Caco-2 (cell line): ENCODE measurements at regions of chr9 and their contacts with region 1.

Region 1: DNA sequence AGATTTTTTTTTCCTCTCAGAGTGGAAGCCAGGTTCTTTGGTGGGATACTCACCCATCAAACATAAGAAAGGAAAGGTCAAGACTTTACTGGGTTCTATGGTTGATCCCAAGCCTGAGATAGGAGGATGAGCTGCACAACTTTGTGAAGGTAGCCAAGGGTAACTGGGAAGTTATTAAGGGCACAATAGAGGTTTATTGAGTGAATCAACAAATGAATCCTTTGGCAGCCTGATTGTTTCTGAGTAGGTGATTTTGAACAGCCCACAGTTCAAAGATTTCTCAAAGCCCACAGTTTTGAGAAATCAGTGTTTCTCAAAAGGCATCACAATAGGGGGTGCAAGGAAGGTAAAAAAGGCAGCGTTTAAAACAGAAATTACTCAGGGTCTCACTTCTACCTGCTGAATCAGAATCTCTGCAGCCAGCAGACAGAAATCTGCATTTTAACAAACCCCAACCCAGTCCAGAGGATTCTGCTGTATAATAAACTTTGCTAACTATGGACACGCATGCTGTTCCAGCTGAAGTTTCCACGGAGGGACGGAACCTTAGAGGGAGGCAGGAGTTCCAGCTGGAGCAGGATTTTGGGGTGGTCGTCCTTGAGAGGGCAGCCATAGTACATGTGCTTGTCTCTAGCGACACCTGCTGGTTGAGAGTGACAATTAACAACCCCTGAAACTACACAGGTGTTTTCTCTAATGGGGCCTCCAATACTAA is 32.7 kb upstream of the FSD1L start:
- DNase-seq: peak; percentile 63 to 65
- H3K4me3 ChIP-seq: no peak overlapping the region
- H3K4me3 Mint-ChIP-seq: peak overlapping the region; percentile 56
- H3K27ac Mint-ChIP-seq: no peak overlapping the region
- H3K4me1 ChIP-seq: peaks cover 22% of the 10 kb centered on the region
- H3K4me1 Mint-ChIP-seq: peaks cover 14% of the 10 kb centered on the region
- H3K27me3 ChIP-seq: no peaks in the 10 kb centered on the region
- H3K27me3 Mint-ChIP-seq: no peaks in the 10 kb centered on the region
- CTCF ChIP-seq: peak; percentile 86 to 94

Region 2: GRCh38 chr9:104863180-104863883 is 551.8 kb before region 1 on chr9:
- CTCF ChIA-PET with region 1: no interaction called
- POLR2A ChIA-PET with region 1: no interaction called
- intact Hi-C with region 1: loop called (anchors 1 kb)
- DNase-seq: peak; percentile 62 to 69
- H3K4me3 ChIP-seq: no peak overlapping the region
- H3K4me3 Mint-ChIP-seq: no peak overlapping the region
- H3K27ac Mint-ChIP-seq: no peak overlapping the region
- H3K4me1 ChIP-seq: 0 out of 2 replicates have a peak, but pooled peaks cover 11% of the 10 kb centered on the region
- H3K4me1 Mint-ChIP-seq: peaks cover 19% of the 10 kb centered on the region
- H3K27me3 ChIP-seq: no peaks in the 10 kb centered on the region
- H3K27me3 Mint-ChIP-seq: no peaks in the 10 kb centered on the region
- CTCF ChIP-seq: peak; percentile 68 to 85

Region 3: GRCh38 chr9:105157130-105157583 is 257.9 kb before region 1 on chr9:
- CTCF ChIA-PET with region 1: no interaction called
- POLR2A ChIA-PET with region 1: no interaction called
- intact Hi-C with region 1: loop called (anchors 1 kb)
- DNase-seq: peak in 1 of 2 experiments; percentile 52
- H3K4me3 ChIP-seq: no peak overlapping the region
- H3K4me3 Mint-ChIP-seq: no peak overlapping the region
- H3K27ac Mint-ChIP-seq: no peak overlapping the region
- H3K4me1 ChIP-seq: 0 out of 2 replicates have a peak, but pooled peaks cover 4% of the 10 kb centered on the region
- H3K4me1 Mint-ChIP-seq: no peaks in the 10 kb centered on the region
- H3K27me3 ChIP-seq: no peaks in the 10 kb centered on the region
- H3K27me3 Mint-ChIP-seq: no peaks in the 10 kb centered on the region
- CTCF ChIP-seq: peak; percentile 32 to 35

Region 4: GRCh38 chr9:105244003-105244733 is 170.9 kb before region 1 on chr9 and contains the start of gene SLC44A1:
- CTCF ChIA-PET with region 1: interaction called, 12 read pairs
- POLR2A ChIA-PET with region 1: interaction called, 8 read pairs
- intact Hi-C with region 1: loop called (anchors 1 kb)
- DNase-seq: peak; percentile 97 to 98
- H3K4me3 ChIP-seq: peak within 1 kb of the TSS; percentile 76
- H3K4me3 Mint-ChIP-seq: peak within 1 kb of the TSS; percentile 97
- H3K27ac Mint-ChIP-seq: peak within 1 kb of the TSS; percentile 91
- H3K4me1 ChIP-seq: peaks cover 14% of the 10 kb centered on the region
- H3K4me1 Mint-ChIP-seq: peaks cover 23% of the 10 kb centered on the region
- H3K27me3 ChIP-seq: no peaks in the 10 kb centered on the region
- H3K27me3 Mint-ChIP-seq: no peaks in the 10 kb centered on the region
- CTCF ChIP-seq: no peak
- total RNA-seq, gene SLC44A1: 45.8 and 46.3 TPM in 2 replicates

Region 5: GRCh38 chr9:105371691-105372090 is 43.4 kb before region 1 on chr9:
- CTCF ChIA-PET with region 1: no interaction called
- POLR2A ChIA-PET with region 1: no interaction called
- intact Hi-C with region 1: loop called (anchors 2 kb)
- DNase-seq: peak in 1 of 2 experiments; percentile 7
- H3K4me3 ChIP-seq: no peak overlapping the region
- H3K4me3 Mint-ChIP-seq: no peak overlapping the region
- H3K27ac Mint-ChIP-seq: no peak overlapping the region
- H3K4me1 ChIP-seq: peaks cover 5% of the 10 kb centered on the region; the same call in 1 of the 2 replicates
- H3K4me1 Mint-ChIP-seq: no peaks in the 10 kb centered on the region
- H3K27me3 ChIP-seq: no peaks in the 10 kb centered on the region
- H3K27me3 Mint-ChIP-seq: no peaks in the 10 kb centered on the region
- CTCF ChIP-seq: no peak